Posterior vena cava (tissue), 2 donors: ENCODE measurements at regions of chr17 and their contacts with region 1.

Region 1: DNA sequence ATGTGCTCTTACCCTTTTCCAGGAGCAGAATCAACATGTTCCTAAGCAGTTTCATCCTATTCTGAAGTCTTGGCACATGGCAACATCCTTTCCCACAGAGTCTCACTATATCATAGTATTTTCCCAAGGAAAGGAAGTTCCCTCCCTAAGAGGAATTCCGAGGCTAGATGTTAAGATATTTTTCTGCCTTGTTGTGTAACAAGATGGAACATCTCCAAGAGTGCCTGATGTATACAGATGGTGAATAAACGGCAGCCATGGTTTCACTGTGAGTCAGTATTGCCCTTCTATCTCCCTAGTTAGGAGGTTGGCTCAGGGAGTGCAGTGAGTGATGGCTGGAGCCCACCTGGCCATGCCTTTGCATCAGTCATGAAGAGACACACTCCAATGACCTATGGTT is 48.2 kb downstream of the SPACA3 start:
- DNase-seq: no peak

Region 2: GRCh38 chr17:32584792-32585191 is 455.1 kb before region 1 on chr17:
- intact Hi-C with region 1: loop called in 1 of 2 experiments (anchors 5 kb)
- DNase-seq: no peak

Region 3: GRCh38 chr17:32960506-32961214 is 79.2 kb before region 1 on chr17:
- intact Hi-C with region 1: no loop called
- DNase-seq: no peak

Region 4: GRCh38 chr17:33142705-33143299 is 102.9 kb after region 1 on chr17:
- intact Hi-C with region 1: no loop called
- DNase-seq: no peak